K562 (cell line): ENCODE measurements at regions of chr10 and their contacts with region 1.

Region 1: GRCh38 chr10:72048450-72049124 is 39.8 kb downstream of the SPOCK2 start:
- DNase-seq: peak; percentile 89 to 95 (median 92)
- ATAC-seq: peak; percentile 94
- H3K4me3 ChIP-seq: no peak overlapping the region
- H3K27ac ChIP-seq: no peak overlapping the region
- H3K4me1 ChIP-seq: peaks cover 4 to 7% of the 10 kb centered on the region in 2 experiments; a peak in 3 of 5 replicates
- H3K27me3 ChIP-seq: peaks cover 0 to 3% of the 10 kb centered on the region in 2 experiments; a peak in 1 of 5 replicates
- CTCF ChIP-seq: peak; percentile 100
- EP300 ChIP-seq: peak; percentile 29; the same call in 1 of the 2 replicates
- POLR2A ChIP-seq: no peak
- RAD21 ChIP-seq: peak; percentile 100

Region 2: GRCh38 chr10:71319042-71319799 is 729.4 kb before region 1 on chr10 and contains the start of gene SLC29A3:
- CTCF ChIA-PET with region 1: no interaction called
- POLR2A ChIA-PET with region 1: no interaction called
- in situ Hi-C with region 1: loop called (anchors 10 kb)
- intact Hi-C with region 1: loop called (anchors 10 kb)
- DNase-seq: peak; percentile 92 to 96 (median 94)
- ATAC-seq: peak; percentile 96
- H3K4me3 ChIP-seq: peak within 1 kb of the TSS; percentile 75
- H3K27ac ChIP-seq: peak within 1 kb of the TSS; percentile 62
- H3K4me1 ChIP-seq: peaks cover 10 to 23% of the 10 kb centered on the region in 2 experiments; a peak in 4 of 5 replicates
- H3K27me3 ChIP-seq: no peaks in the 10 kb centered on the region
- CTCF ChIP-seq: peak; percentile 90 to 96 (median 94)
- EP300 ChIP-seq: no peak
- POLR2A ChIP-seq: peak; percentile 80
- RAD21 ChIP-seq: peak; percentile 84 to 91
- polyA plus RNA-seq, gene SLC29A3: 6.3 to 10.3 TPM

Region 3: DNA sequence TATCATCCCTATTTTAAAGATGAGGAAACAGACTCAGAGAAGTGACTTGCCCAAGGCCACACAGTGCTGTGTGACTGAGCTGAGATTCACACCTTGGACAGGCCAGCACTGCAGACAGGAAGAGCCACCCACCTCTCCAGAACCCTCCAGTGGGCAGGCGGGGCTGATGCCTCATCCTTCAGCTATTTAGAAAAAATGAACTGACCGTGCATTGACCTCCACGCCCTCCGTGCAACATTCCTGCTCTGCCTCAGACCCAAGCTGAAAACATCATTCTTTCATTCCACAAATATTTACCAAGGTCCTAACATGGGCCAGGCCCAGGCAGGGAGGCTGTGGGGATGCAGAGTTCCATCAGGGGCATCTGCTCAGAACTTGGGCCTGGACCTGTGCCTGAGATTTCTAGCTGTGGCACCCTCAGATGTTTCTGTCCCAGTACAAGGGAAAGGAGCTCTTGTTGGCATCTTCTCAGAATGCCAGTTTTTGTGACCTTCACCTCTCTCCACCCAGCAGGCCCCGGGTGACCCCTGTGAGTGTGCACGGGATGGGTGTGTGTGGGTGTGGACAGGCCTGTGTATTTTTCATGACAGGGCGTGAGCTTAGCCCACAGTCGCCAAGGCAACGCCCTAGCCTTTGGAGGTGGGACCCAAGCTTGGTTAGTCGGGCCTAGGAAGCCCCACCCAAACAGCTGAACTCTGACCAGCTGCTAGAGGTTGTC is 281.7 kb before region 1 on chr10:
- CTCF ChIA-PET with region 1: no interaction called
- POLR2A ChIA-PET with region 1: no interaction called
- in situ Hi-C with region 1: no loop called
- intact Hi-C with region 1: no loop called
- DNase-seq: peak; percentile 48 to 76 (median 66)
- ATAC-seq: peak; percentile 59
- H3K4me3 ChIP-seq: no peak overlapping the region
- H3K27ac ChIP-seq: no peak overlapping the region
- H3K4me1 ChIP-seq: peaks cover 31 to 32% of the 10 kb centered on the region in 2 experiments
- H3K27me3 ChIP-seq: peaks cover 0 to 6% of the 10 kb centered on the region in 2 experiments; a peak in 2 of 5 replicates
- CTCF ChIP-seq: no peak
- EP300 ChIP-seq: no peak
- POLR2A ChIP-seq: no peak
- RAD21 ChIP-seq: no peak

Region 4: DNA sequence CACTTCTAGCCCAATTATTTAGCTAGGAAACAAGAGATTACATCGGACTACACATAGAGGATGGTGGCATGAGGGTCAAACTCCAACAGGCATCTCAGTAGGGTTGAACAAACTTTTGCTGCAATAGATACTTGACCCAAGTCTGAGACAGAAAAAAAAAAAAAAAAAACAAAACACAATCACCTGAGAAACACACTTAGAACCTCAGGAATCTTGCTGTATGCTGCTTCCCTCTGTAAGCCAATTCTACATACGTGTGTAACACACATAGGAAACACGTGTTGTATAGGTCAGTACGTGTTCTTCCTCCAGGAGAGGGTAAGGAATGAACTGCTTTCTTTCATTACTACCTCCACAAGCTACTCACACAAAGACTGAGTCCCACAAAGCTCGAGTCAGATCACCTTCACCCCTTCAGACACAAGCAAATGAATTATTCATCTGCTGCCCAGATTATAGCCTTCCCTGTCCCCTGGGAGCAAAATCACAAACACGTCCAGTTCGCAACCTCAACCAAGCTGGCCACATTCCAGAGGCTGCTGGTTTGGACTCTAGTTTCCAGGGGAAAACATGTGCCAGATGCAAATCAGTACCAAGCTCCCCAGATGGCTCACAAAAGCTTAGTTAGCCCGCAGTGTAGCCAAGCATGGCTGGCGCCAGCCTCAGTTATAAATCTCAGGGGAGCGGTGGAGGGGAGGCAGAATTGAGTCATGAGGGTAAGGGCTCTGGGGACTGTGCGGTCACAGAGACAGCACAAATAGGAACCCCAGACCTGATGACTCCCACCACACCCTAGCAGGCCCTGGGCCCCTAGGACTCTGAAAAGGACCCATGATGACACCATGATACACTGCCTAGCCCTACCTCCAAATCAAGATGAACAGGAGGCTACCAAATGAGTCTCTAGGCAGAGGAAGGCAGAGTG is 212.7 kb before region 1 on chr10:
- CTCF ChIA-PET with region 1: interaction called, 3 read pairs
- POLR2A ChIA-PET with region 1: no interaction called
- in situ Hi-C with region 1: no loop called
- intact Hi-C with region 1: loop called (anchors 2 kb)
- DNase-seq: no peak
- ATAC-seq: no peak
- H3K4me3 ChIP-seq: no peak overlapping the region
- H3K27ac ChIP-seq: no peak overlapping the region
- H3K4me1 ChIP-seq: peaks cover 23 to 40% of the 10 kb centered on the region in 2 experiments; a peak in 4 of 5 replicates
- H3K27me3 ChIP-seq: no peaks in the 10 kb centered on the region
- CTCF ChIP-seq: no peak
- EP300 ChIP-seq: no peak
- POLR2A ChIP-seq: no peak
- RAD21 ChIP-seq: no peak

Region 5: DNA sequence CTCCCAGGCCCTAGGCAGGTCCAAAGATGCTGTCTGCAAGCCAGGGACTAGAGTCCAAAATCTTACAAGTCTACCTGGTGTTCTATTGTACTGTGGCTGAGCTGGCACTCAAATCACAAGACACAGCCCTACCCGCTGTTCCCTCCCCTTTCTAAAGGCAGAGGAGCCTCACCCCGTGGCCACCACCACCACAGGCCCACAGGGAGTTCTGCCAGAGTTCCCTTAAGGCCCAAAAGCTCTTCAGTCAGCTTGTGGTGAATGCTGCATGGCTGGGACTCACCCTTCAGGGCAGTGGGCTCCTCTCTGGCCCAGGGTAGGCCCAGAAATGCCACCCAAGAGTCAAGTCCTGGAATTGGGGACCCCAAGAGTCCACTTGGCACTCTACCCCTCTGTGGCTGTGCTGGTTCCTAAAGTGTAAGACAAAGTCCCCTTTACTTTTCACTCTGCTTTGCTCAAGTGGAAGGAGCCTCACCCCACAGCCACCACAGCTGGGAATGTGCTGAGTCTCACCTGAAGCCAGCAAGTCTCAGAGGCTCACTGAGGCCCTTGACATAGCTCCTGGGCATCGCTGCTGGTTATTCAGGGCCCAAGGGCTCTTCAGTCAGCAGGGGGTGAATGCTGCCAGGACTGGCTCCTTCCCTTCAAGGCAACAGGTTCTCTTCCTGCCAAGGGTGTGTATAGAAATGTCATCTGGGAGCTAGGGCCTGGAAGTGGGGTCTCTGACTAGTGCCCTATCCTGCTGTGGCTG is 148.7 kb before region 1 on chr10:
- CTCF ChIA-PET with region 1: interaction called, 159 read pairs
- POLR2A ChIA-PET with region 1: interaction called, 4 read pairs
- in situ Hi-C with region 1: loop called (anchors 5 kb)
- intact Hi-C with region 1: loop called (anchors 1 kb)
- DNase-seq: no peak
- ATAC-seq: no peak
- H3K4me3 ChIP-seq: no peak overlapping the region
- H3K27ac ChIP-seq: no peak overlapping the region
- H3K4me1 ChIP-seq: peaks cover 0 to 3% of the 10 kb centered on the region in 2 experiments; a peak in 2 of 5 replicates
- H3K27me3 ChIP-seq: no peaks in the 10 kb centered on the region
- CTCF ChIP-seq: no peak
- EP300 ChIP-seq: no peak
- POLR2A ChIP-seq: no peak
- RAD21 ChIP-seq: no peak

Region 6: GRCh38 chr10:71974489-71975021 is 74.0 kb before region 1 on chr10:
- CTCF ChIA-PET with region 1: interaction called, 6 read pairs
- POLR2A ChIA-PET with region 1: no interaction called
- in situ Hi-C with region 1: no loop called
- intact Hi-C with region 1: loop called (anchors 5 kb)
- DNase-seq: no peak
- ATAC-seq: no peak
- H3K4me3 ChIP-seq: no peak overlapping the region
- H3K27ac ChIP-seq: no peak overlapping the region
- H3K4me1 ChIP-seq: peaks cover 3 to 12% of the 10 kb centered on the region in 2 experiments; a peak in 3 of 5 replicates
- H3K27me3 ChIP-seq: peaks cover 28 to 73% of the 10 kb centered on the region in 2 experiments
- CTCF ChIP-seq: no peak
- EP300 ChIP-seq: no peak
- POLR2A ChIP-seq: no peak
- RAD21 ChIP-seq: no peak

Region 7: DNA sequence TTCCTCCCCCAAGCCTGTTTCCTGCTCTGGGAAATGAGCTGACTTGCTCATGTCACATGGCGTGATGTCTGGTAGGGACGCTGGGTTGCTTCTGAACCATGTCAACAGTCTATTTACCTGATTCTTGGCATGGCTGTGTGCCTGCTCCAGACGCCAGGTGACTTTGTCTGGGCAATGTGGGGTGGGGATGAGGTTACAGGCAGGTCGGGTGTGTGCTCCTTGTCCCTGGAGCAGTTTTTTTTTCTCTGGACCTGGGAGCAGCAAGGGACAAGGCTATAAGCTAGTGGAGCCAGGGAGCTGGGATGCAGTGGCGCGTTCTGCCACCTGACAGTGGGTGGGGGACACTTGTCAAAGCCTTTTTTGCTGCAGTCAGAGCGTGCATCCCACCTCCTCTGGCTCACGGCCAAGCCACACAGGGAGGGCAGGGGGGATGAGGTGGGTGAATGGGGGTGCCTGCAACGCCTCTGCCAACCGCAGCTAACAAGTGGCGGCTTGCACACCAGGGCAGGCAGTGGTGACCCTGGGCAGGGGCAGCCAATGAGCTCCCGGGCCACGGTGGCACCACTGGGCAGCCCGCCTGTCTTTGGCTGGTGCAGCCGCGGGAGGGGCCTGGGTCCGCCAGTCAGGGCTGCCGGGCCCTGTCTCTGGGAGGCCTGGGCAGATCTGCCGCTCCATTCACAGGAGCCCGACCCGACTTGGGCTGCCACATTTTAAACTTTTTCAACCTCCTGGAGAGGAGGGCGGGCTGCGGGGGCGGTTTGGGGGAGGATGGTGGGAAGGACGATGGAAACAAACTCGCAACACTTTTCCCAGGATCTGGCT is 283.2 kb after region 1 on chr10:
- CTCF ChIA-PET with region 1: interaction called, 22 read pairs
- POLR2A ChIA-PET with region 1: interaction called, 4 read pairs
- in situ Hi-C with region 1: no loop called
- intact Hi-C with region 1: loop called (anchors 1 kb)
- DNase-seq: peak in 1 of 4 experiments; percentile 26
- ATAC-seq: no peak
- H3K4me3 ChIP-seq: no peak overlapping the region
- H3K27ac ChIP-seq: no peak overlapping the region
- H3K4me1 ChIP-seq: peaks cover 18 to 44% of the 10 kb centered on the region in 2 experiments; a peak in 4 of 5 replicates
- H3K27me3 ChIP-seq: no peaks in the 10 kb centered on the region
- CTCF ChIP-seq: no peak
- EP300 ChIP-seq: no peak
- POLR2A ChIP-seq: peak; percentile 47
- RAD21 ChIP-seq: no peak